Activated CD8-positive, alpha-beta T cell treated with anti-CD3 and anti-CD28 coated beads for 36 hours (primary cell): ENCODE measurements at regions of chr6 and their contacts with region 1.

Region 1: GRCh38 chr6:106097411-106098231 is 11.5 kb downstream of the PRDM1 start:
- DNase-seq: peak; percentile 68
- ATAC-seq: peak; percentile 42
- H3K4me3 Mint-ChIP-seq: peak overlapping the region; percentile 78
- H3K27ac Mint-ChIP-seq: peak overlapping the region; percentile 96
- H3K4me1 Mint-ChIP-seq: peaks cover 84% of the 10 kb centered on the region
- H3K27me3 Mint-ChIP-seq: peaks cover 10% of the 10 kb centered on the region
- CTCF ChIP-seq: no peak

Region 2: DNA sequence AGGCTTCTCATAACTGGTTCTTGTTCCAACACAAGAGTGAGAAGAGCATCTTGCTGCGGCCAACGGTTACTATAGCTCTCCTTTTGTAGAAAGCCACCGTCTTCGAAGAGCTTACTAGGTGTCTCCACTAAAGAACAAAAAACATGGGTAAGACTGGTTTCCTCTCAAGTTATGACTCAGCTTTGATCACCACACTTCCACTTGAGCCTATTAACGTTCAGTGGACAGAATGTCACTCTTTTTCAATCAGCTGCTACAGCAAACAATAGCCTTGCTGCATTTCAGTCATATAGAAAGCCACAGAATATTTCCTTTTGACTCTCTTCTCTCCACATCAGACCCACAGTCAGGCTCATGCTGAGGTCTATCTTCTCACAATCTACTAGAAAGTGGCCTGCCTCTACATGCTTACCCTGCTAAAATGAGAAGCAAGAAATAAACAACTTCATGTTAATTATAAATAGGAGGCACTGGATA is 451.2 kb before region 1 on chr6:
- CTCF ChIA-PET with region 1: no interaction called
- POLR2A ChIA-PET with region 1: interaction called, 3 read pairs
- intact Hi-C with region 1: loop called (anchors 2 kb)
- DNase-seq: peak; percentile 76
- ATAC-seq: peak; percentile 84
- H3K4me3 Mint-ChIP-seq: no peak overlapping the region
- H3K27ac Mint-ChIP-seq: peak overlapping the region; percentile 89
- H3K4me1 Mint-ChIP-seq: peaks cover 67% of the 10 kb centered on the region
- H3K27me3 Mint-ChIP-seq: peaks cover 3% of the 10 kb centered on the region
- CTCF ChIP-seq: no peak

Region 3: DNA sequence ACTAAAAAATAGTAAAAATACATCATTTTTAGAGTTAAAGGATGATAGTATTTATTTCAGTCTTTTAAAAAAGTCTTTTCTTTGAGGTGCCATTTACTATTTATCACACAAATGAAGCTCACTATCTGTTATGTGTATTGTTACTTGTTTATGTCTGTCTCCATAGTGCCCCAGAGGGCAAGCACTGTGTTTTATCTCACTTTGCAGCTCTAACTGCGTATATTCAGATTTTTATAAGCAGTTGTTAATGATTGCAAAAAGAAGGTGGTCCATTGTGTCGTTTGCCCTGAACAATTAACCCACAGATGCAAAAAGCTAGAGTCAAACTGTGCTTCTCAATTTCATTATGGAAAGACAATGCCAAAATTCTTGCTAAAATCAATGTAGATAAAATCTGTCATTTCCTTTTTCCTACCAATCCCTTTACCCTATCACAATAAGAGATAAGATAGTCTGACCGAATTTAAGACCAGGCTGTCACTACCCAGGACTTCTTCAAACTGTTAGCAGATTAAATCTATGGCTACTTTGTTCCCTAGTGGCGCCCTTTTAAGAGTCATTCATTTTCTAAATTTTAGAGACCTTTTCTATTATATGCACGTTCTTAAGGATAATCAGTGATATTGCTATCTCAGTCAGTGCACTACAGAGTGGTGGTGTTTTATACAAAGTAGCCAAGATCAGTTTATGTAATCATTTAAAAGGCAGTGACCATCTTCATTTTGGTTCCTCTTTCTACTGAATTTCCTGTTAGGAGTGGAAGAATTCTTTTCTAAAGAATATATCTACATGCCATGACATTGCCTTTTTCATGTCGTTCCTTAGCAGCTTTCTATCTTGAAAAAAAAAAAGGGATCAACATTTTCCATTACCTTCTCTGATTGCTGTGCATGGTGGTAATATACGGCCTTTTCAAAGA is 144.6 kb before region 1 on chr6:
- CTCF ChIA-PET with region 1: no interaction called
- POLR2A ChIA-PET with region 1: no interaction called
- intact Hi-C with region 1: no loop called
- DNase-seq: no peak
- ATAC-seq: no peak
- H3K4me3 Mint-ChIP-seq: no peak overlapping the region
- H3K27ac Mint-ChIP-seq: no peak overlapping the region
- H3K4me1 Mint-ChIP-seq: no peaks in the 10 kb centered on the region
- H3K27me3 Mint-ChIP-seq: peaks cover 8% of the 10 kb centered on the region
- CTCF ChIP-seq: no peak

Region 4: GRCh38 chr6:105992315-105992961 is 105.2 kb before region 1 on chr6:
- CTCF ChIA-PET with region 1: interaction called, 5 read pairs
- POLR2A ChIA-PET with region 1: interaction called, 4 read pairs
- intact Hi-C with region 1: loop called (anchors 5 kb)
- DNase-seq: peak; percentile 88
- ATAC-seq: peak; percentile 88
- H3K4me3 Mint-ChIP-seq: peak overlapping the region; percentile 82
- H3K27ac Mint-ChIP-seq: peak overlapping the region; percentile 81
- H3K4me1 Mint-ChIP-seq: peaks cover 16% of the 10 kb centered on the region
- H3K27me3 Mint-ChIP-seq: peaks cover 71% of the 10 kb centered on the region
- CTCF ChIP-seq: no peak

Region 5: GRCh38 chr6:106072501-106073090 is 25.0 kb before region 1 on chr6:
- CTCF ChIA-PET with region 1: no interaction called
- POLR2A ChIA-PET with region 1: no interaction called
- intact Hi-C with region 1: no loop called
- DNase-seq: no peak
- ATAC-seq: no peak
- H3K4me3 Mint-ChIP-seq: no peak overlapping the region
- H3K27ac Mint-ChIP-seq: no peak overlapping the region
- H3K4me1 Mint-ChIP-seq: no peaks in the 10 kb centered on the region
- H3K27me3 Mint-ChIP-seq: peaks cover 5% of the 10 kb centered on the region
- CTCF ChIP-seq: no peak

Region 6: GRCh38 chr6:106114492-106115265 is 17.1 kb after region 1 on chr6:
- CTCF ChIA-PET with region 1: interaction called, 4 read pairs
- POLR2A ChIA-PET with region 1: interaction called, 28 read pairs
- intact Hi-C with region 1: loop called (anchors 2 kb)
- DNase-seq: peak; percentile 93
- ATAC-seq: peak; percentile 74
- H3K4me3 Mint-ChIP-seq: peak overlapping the region; percentile 46
- H3K27ac Mint-ChIP-seq: peak overlapping the region; percentile 71
- H3K4me1 Mint-ChIP-seq: peaks cover 89% of the 10 kb centered on the region
- H3K27me3 Mint-ChIP-seq: peaks cover 18% of the 10 kb centered on the region
- CTCF ChIP-seq: no peak

Region 7: GRCh38 chr6:106163446-106163965 is 65.9 kb after region 1 on chr6:
- CTCF ChIA-PET with region 1: interaction called, 4 read pairs
- POLR2A ChIA-PET with region 1: interaction called, 25 read pairs
- intact Hi-C with region 1: loop called (anchors 1 kb)
- DNase-seq: peak; percentile 83
- ATAC-seq: peak; percentile 65
- H3K4me3 Mint-ChIP-seq: peak overlapping the region; percentile 58
- H3K27ac Mint-ChIP-seq: peak overlapping the region; percentile 95
- H3K4me1 Mint-ChIP-seq: peaks cover 51% of the 10 kb centered on the region
- H3K27me3 Mint-ChIP-seq: no peaks in the 10 kb centered on the region
- CTCF ChIP-seq: no peak

Region 8: DNA sequence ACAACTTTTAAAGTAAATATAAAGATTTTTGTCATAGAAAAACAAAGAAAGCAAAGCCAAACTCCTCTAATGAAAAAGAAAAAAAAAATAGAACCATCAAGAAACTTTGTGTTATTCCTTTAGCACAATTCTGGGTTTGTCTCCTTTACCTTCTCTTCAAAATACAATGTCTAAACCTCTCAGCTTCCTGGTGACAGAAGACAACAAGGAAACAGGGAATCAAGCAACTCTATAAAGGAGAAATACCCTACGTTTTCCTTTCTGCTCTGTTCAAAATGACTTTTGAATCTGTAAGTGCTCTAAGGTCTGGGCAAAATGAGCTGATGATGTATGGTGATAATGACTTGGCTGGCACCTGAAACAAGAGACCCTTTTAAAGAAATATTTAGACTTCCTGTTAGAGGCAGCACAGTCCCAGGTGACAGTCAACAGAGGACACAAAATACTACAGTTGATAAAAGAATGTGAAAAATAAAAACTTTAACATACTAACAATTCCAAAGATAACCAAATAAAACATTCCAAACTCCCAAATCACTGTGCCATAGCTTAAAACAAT is 89.9 kb after region 1 on chr6:
- CTCF ChIA-PET with region 1: interaction called, 4 read pairs
- POLR2A ChIA-PET with region 1: interaction called, 44 read pairs
- intact Hi-C with region 1: loop called (anchors 2 kb)
- DNase-seq: no peak
- ATAC-seq: peak; percentile 32
- H3K4me3 Mint-ChIP-seq: peak overlapping the region; percentile 18
- H3K27ac Mint-ChIP-seq: peak overlapping the region; percentile 91
- H3K4me1 Mint-ChIP-seq: peaks cover 63% of the 10 kb centered on the region
- H3K27me3 Mint-ChIP-seq: no peaks in the 10 kb centered on the region
- CTCF ChIP-seq: no peak

Region 9: DNA sequence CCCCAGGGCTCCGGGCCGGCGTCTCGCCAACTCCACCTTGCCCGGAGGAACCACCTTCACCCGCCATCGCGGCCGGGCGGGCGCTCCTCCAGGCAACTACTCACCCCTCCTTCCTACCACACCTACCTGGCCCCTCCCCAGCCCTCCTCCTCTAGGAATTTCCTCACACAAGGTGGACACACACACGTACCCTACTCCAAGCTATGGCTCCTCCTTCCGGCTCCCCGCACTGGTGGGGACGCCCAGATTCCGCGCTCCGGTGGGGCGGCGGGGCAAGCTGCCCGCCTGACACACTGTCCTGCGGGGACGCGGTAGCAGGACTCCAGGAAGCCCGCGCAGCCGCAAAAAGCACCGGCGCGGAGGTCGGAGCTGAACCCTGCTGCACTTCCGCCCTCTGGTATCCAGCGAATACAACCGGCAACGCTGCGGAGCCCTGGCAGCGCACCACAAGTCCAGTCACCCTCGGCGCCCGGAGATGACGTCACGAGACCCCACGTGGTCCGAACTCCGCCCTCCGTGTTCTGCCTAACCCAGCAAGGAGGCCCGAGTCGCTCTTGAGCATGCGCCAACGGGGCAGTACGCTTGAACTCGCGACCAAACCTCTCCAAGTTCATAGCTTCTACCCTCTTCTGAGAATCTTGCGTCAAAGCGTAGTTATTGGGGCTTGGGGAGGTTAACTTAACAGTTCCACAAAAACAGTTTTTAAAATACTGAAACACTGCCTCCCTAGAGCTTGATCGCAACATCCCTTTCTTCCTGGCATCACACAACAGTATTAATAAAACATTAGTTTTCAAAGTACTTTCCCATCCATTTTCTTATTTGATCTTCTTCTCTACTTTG is 227.9 kb after region 1 on chr6 and contains the start of gene ATG5:
- CTCF ChIA-PET with region 1: no interaction called
- POLR2A ChIA-PET with region 1: interaction called, 4 read pairs
- intact Hi-C with region 1: loop called (anchors 5 kb)
- DNase-seq: peak; percentile 100
- ATAC-seq: peak; percentile 95
- H3K4me3 Mint-ChIP-seq: peak within 1 kb of the TSS; percentile 98
- H3K27ac Mint-ChIP-seq: peak within 1 kb of the TSS; percentile 99
- H3K4me1 Mint-ChIP-seq: peaks cover 35% of the 10 kb centered on the region
- H3K27me3 Mint-ChIP-seq: peaks cover 4% of the 10 kb centered on the region
- CTCF ChIP-seq: no peak
- total RNA-seq, gene ATG5: 31.2 to 32.4 TPM